CD8-positive, alpha-beta memory T cell (primary cell): ENCODE measurements at regions of chr4 and their contacts with region 1.

Region 1: DNA sequence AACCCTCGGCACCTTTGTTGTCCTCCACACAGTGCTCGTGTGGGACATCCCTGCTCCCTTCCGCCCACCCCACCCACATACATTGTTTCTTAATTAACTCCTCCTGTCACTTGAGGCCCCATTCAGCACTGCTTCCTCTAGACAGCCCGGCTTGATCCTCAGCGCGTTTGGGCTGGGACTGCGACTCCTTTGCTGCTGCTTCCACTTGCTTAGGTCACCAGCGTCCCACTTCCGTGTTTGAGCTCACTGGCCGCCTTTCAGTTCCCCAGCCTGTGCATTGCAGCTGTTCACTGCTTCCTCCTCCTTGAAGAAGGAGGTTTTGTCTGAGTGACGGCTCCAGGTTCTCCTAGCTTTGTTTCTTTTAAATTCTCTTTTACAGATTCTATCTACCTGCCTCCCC is 16.1 kb downstream of the RNF4 start:
- DNase-seq: peak; percentile 43 to 80 (median 63)
- H3K4me3 ChIP-seq: peak overlapping the region; percentile 51
- H3K4me3 Mint-ChIP-seq: peak overlapping the region; percentile 55 to 90 (median 81)
- H3K27ac ChIP-seq: peak overlapping the region; percentile 41
- H3K27ac Mint-ChIP-seq: peak overlapping the region; percentile 74 to 94 (median 90)
- H3K4me1 ChIP-seq: peaks cover 77% of the 10 kb centered on the region
- H3K4me1 Mint-ChIP-seq: peaks cover 78 to 91% (median 87%) of the 10 kb centered on the region in 3 donors
- H3K27me3 ChIP-seq: no peaks in the 10 kb centered on the region
- H3K27me3 Mint-ChIP-seq: no peaks in the 10 kb centered on the region

Region 2: DNA sequence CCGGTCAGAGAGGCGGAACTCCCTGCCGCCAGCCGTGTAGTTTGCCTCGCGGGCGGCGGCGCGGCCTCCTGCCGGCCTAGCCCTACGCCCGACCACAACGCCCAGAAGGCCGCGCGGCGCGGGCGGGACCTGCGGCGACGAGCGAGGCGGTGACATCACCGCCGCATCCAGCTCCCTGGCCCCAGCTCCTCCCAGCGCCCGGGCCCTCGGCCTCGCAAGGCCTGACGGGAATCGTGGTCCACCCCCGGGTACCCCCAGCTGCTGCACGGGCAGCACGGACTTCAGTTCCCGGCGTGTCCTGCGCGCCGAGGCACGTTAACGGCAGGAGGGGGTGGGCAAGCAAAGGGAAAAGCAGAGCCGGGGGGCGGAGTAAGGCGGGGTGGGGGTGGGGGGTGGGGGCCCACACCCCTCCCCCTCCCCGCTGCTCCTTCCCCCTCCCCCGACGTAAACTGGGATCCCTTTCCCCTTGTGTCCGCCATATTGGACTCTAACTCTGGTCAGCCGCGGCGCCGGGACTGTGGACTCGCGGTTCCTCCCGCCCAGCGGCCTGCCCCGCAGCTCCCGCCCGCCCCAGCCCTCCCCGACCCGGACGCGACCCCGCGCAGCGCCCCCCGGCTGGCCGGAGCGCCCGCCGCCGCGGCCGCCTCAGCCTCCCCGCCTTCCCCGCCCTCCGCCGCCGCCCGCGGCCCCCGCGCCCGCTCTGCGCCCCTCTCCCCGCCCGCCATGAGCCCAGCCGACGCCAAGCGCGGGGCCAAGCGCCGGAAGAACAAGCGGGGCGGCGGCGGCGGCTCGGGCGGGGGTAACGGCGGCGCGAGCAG is 51.4 kb after region 1 on chr4 and contains the start of gene FAM193A:
- CTCF ChIA-PET with region 1: no interaction called
- POLR2A ChIA-PET with region 1: interaction called, 18 read pairs
- DNase-seq: peak; percentile 97 to 100 (median 99)
- H3K4me3 ChIP-seq: peak within 1 kb of the TSS; percentile 80
- H3K4me3 Mint-ChIP-seq: peak within 1 kb of the TSS; percentile 88 to 97 (median 91)
- H3K27ac ChIP-seq: peak within 1 kb of the TSS; percentile 80
- H3K27ac Mint-ChIP-seq: peak within 1 kb of the TSS; percentile 93 to 95 (median 94)
- H3K4me1 ChIP-seq: peaks cover 27% of the 10 kb centered on the region
- H3K4me1 Mint-ChIP-seq: peaks cover 16 to 42% (median 20%) of the 10 kb centered on the region in 3 donors
- H3K27me3 ChIP-seq: no peaks in the 10 kb centered on the region
- H3K27me3 Mint-ChIP-seq: no peaks in the 10 kb centered on the region
- total RNA-seq, gene FAM193A: 25.8 to 26.9 TPM

Region 3: DNA sequence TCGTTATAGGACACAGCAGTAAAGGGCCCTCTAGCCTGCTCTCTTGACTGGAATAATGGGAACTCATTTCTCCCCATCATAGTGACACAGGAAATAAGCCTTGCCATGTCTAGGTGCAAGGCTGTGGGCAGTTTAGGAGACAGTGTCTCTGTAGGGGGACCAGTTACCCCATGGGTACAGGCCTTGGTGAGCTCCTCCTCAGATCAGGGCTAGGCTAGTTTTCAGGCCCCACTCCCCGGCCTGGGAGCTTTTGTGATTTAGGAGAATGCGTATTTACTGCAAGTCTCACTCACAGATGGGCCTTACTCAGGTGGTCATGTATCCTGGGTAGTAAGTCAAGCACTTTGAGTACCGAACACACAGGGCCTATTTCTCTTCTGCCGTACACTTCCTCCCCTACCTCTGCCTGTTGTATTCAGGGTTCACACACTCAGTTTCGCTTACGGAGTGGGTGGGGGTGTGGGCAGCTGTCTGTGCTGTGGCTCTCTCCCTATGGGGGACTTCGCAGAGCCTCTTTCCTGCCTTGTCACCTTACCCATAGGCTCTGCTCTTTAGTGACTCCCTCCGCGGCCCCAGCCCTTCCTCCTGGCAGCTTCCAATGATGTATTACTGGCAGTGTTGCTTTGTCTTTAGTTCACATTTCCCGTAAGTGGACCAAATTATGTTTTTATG is 85.7 kb after region 1 on chr4:
- CTCF ChIA-PET with region 1: no interaction called
- POLR2A ChIA-PET with region 1: no interaction called
- DNase-seq: peak; percentile 37 to 70 (median 63)
- H3K4me3 ChIP-seq: no peak overlapping the region
- H3K4me3 Mint-ChIP-seq: peak overlapping the region in 6 of 7 donors; percentile 53 to 75 (median 61)
- H3K27ac ChIP-seq: no peak overlapping the region
- H3K27ac Mint-ChIP-seq: peak overlapping the region; percentile 27 to 93 (median 80)
- H3K4me1 ChIP-seq: peaks cover 22% of the 10 kb centered on the region
- H3K4me1 Mint-ChIP-seq: peaks cover 57 to 73% (median 65%) of the 10 kb centered on the region in 3 donors
- H3K27me3 ChIP-seq: no peaks in the 10 kb centered on the region
- H3K27me3 Mint-ChIP-seq: no peaks in the 10 kb centered on the region